HepG2 (cell line): ENCODE measurements at regions of chr6 and their contacts with region 1.

Region 1: GRCh38 chr6:143397229-143398222 is 53.0 kb downstream of the ADAT2 start:
- DNase-seq: peak; percentile 99
- ATAC-seq: peak; percentile 90
- H3K4me3 ChIP-seq: peak overlapping the region; percentile 31 to 68 (median 48)
- H3K27ac ChIP-seq: peak overlapping the region; percentile 90
- H3K4me1 ChIP-seq: peaks cover 58% of the 10 kb centered on the region
- H3K27me3 ChIP-seq: no peaks in the 10 kb centered on the region; a peak in 1 of 5 replicates
- CTCF ChIP-seq: no peak
- EP300 ChIP-seq: peak; percentile 95 to 99
- POLR2A ChIP-seq: peak in 1 of 2 experiments; percentile 75; a peak in 2 of 4 replicates
- RAD21 ChIP-seq: no peak; the same call in 1 of the 2 replicates

Region 2: GRCh38 chr6:143337201-143337949 is 60.2 kb before region 1 on chr6:
- CTCF ChIA-PET with region 1: no interaction called
- POLR2A ChIA-PET with region 1: no interaction called
- in situ Hi-C with region 1: no loop called
- intact Hi-C with region 1: loop called (anchors 5 kb)
- DNase-seq: peak; percentile 16
- ATAC-seq: peak; percentile 92
- H3K4me3 ChIP-seq: no peak overlapping the region
- H3K27ac ChIP-seq: no peak overlapping the region
- H3K4me1 ChIP-seq: no peaks in the 10 kb centered on the region
- H3K27me3 ChIP-seq: no peaks in the 10 kb centered on the region
- CTCF ChIP-seq: peak; percentile 81
- EP300 ChIP-seq: no peak
- POLR2A ChIP-seq: no peak
- RAD21 ChIP-seq: peak; percentile 53

Region 3: DNA sequence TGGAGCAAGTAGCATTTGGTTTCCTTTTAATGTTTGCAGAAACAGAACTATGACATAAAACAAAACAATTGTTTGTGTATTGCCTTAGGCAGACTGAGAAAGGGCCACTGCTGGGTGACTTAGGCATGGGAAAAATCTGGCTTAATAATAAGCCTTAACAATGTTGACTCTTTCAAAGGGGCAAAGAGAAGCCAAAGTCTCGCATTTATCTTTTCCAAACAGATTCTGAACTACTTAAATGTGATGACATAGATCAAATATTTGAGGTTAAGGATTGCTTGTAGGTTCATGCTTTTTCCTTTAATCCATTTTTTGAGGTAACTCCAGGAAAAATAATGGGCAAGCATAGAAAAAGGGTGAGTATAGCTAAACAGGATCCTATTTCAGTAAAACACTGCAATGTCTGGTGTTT is 13.3 kb after region 1 on chr6:
- CTCF ChIA-PET with region 1: interaction called, 3 read pairs
- POLR2A ChIA-PET with region 1: interaction called, 27 read pairs
- in situ Hi-C with region 1: no loop called
- intact Hi-C with region 1: loop called (anchors 1 kb)
- DNase-seq: peak; percentile 95
- ATAC-seq: peak; percentile 75
- H3K4me3 ChIP-seq: no peak overlapping the region; a peak in 1 of 6 replicates
- H3K27ac ChIP-seq: peak overlapping the region; percentile 53
- H3K4me1 ChIP-seq: peaks cover 64% of the 10 kb centered on the region
- H3K27me3 ChIP-seq: no peaks in the 10 kb centered on the region
- CTCF ChIP-seq: no peak
- EP300 ChIP-seq: peak in 1 of 2 experiments; percentile 97; a peak in 2 of 4 replicates
- POLR2A ChIP-seq: no peak
- RAD21 ChIP-seq: no peak